H1 (cell line): ENCODE measurements at regions of chr5 and their contacts with region 1.

Region 1: GRCh38 chr5:103475629-103476240 is 86.9 kb downstream of the NUDT12 start:
- DNase-seq: no peak
- H3K4me3 ChIP-seq: no peak overlapping the region
- H3K27ac ChIP-seq: no peak overlapping the region
- H3K4me1 ChIP-seq: peaks cover 0 to 4% (median 0%) of the 10 kb centered on the region in 4 experiments; a peak in 1 of 7 replicates
- H3K27me3 ChIP-seq: no peaks in the 10 kb centered on the region
- CTCF ChIP-seq: peak in 2 of 3 experiments; percentile 34 to 53; a peak in 2 of 4 replicates
- EP300 ChIP-seq: no peak
- POLR2A ChIP-seq: no peak
- RAD21 ChIP-seq: peak; percentile 80 to 87

Region 2: DNA sequence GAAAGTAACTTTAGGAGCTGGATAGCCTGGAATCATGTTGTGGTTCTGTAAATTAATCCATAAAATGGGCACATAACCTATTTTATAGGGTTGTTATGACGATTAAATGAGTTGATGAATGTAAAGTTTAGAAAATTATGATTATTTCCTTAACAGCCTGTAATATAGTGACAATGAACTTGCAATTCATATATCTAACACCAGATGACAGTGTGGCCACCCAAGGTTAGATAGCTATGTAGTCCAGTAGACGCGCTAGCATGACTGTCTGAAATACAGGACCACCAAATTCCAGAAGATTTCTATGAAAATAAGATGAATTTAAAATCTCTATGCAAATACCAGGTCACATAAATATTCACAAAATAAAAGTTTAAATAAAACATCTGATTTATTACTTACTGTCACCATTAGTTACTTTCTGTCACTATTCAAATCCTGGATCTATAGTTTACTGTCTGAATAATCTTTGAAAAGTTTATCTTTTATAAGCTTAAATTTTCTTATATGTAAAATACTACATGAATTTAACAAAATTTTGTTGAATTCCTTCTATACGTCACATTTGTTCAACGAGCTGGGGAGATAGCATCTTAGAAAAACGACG is 243.2 kb before region 1 on chr5:
- CTCF ChIA-PET with region 1: interaction called, 37 read pairs
- POLR2A ChIA-PET with region 1: no interaction called
- DNase-seq: no peak
- H3K4me3 ChIP-seq: no peak overlapping the region
- H3K27ac ChIP-seq: no peak overlapping the region
- H3K4me1 ChIP-seq: no peaks in the 10 kb centered on the region
- H3K27me3 ChIP-seq: no peaks in the 10 kb centered on the region
- CTCF ChIP-seq: peak in 2 of 3 experiments; percentile 47 to 62; a peak in 2 of 4 replicates
- EP300 ChIP-seq: no peak
- POLR2A ChIP-seq: no peak
- RAD21 ChIP-seq: peak; percentile 64 to 68

Region 3: DNA sequence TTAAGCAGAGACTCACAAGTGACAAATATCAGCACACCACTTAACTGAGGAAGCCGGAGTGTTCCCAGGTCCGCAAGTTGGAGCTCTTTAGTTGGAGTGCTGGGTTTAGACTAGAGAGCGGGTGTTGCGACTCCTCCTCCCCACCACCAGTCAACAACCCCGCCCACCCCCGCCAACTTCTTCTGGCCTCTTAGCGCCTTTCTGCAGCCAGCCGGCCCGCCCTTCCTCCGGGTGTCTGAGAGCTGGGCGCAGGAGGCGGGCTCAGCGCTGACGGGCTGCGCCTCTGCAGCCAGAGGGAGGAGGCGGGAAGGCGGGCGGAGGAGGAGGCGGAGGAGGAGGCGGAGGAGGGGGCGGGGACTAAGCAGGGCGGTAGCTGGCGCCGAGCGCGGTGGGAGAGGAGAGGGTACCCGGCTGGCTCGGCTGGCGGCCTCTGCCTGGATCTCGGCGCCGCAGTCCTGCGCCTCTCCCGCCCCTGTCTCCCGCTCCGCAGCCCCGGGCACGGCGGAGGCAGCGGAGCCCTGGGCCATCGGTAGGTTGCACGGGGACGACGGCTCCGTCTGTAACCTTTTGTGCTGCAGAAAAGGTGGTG is 217.3 kb before region 1 on chr5 and contains the start of gene MACIR:
- CTCF ChIA-PET with region 1: interaction called, 26 read pairs
- POLR2A ChIA-PET with region 1: no interaction called
- DNase-seq: peak; percentile 90 to 97
- H3K4me3 ChIP-seq: peak within 1 kb of the TSS; percentile 61 to 94 (median 88)
- H3K27ac ChIP-seq: peak within 1 kb of the TSS; percentile 78
- H3K4me1 ChIP-seq: peaks cover 0 to 6% (median 0%) of the 10 kb centered on the region in 4 experiments; a peak in 1 of 7 replicates
- H3K27me3 ChIP-seq: no peaks in the 10 kb centered on the region
- CTCF ChIP-seq: no peak
- EP300 ChIP-seq: no peak
- POLR2A ChIP-seq: peak; percentile 65 to 79
- RAD21 ChIP-seq: peak in 1 of 2 experiments; percentile 13; a peak in 2 of 4 replicates
- total RNA-seq, gene MACIR: 17.7 and 19.2 TPM in 2 replicates

Region 4: GRCh38 chr5:103464835-103465484 is 10.8 kb before region 1 on chr5:
- CTCF ChIA-PET with region 1: interaction called, 23 read pairs
- POLR2A ChIA-PET with region 1: no interaction called
- DNase-seq: no peak
- H3K4me3 ChIP-seq: no peak overlapping the region
- H3K27ac ChIP-seq: no peak overlapping the region
- H3K4me1 ChIP-seq: no peaks in the 10 kb centered on the region
- H3K27me3 ChIP-seq: no peaks in the 10 kb centered on the region
- CTCF ChIP-seq: no peak
- EP300 ChIP-seq: no peak
- POLR2A ChIP-seq: no peak
- RAD21 ChIP-seq: peak; percentile 1 to 30; a peak in 1 of 4 replicates

Region 5: DNA sequence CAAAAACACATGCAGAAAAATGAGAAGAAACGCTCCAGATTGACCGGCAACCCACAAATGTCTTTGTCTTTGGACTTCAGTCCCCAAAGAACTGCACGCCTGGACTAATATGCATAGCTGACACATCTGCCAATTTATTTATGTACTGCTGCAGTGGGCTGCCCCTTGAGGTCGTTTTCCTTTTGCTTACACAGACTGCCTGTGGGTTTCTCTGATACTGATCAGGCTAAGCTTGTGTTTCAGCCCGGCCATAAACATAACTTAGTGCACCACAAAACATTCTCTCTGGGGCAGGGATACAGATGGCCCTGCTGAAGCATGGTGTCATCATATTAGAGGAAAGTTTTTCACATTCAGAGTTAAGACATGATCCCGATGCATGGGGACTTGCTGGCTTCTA is 11.5 kb after region 1 on chr5:
- CTCF ChIA-PET with region 1: interaction called, 34 read pairs
- POLR2A ChIA-PET with region 1: no interaction called
- DNase-seq: no peak
- H3K4me3 ChIP-seq: no peak overlapping the region
- H3K27ac ChIP-seq: no peak overlapping the region
- H3K4me1 ChIP-seq: peaks cover 0 to 12% (median 1%) of the 10 kb centered on the region in 4 experiments; a peak in 1 of 7 replicates
- H3K27me3 ChIP-seq: no peaks in the 10 kb centered on the region
- CTCF ChIP-seq: no peak
- EP300 ChIP-seq: no peak
- POLR2A ChIP-seq: no peak
- RAD21 ChIP-seq: no peak